ENCODE measurements at regions of chr7 and their contacts with region 1.

Region 1: GRCh38 chr7:99616359-99617191 is at the start of gene ZSCAN25:
- DNase-seq: peak; percentile 78 to 98 (median 88)

Region 2: GRCh38 chr7:99558306-99559174 is 58.0 kb before region 1 on chr7 and contains the start of gene ZNF655:
- intact Hi-C with region 1: loop called (anchors 5 kb)
- DNase-seq: peak; percentile 86 to 98 (median 90)